Endothelial cell of umbilical vein (primary cell): ENCODE measurements at regions of chr11 and their contacts with region 1.

Region 1: DNA sequence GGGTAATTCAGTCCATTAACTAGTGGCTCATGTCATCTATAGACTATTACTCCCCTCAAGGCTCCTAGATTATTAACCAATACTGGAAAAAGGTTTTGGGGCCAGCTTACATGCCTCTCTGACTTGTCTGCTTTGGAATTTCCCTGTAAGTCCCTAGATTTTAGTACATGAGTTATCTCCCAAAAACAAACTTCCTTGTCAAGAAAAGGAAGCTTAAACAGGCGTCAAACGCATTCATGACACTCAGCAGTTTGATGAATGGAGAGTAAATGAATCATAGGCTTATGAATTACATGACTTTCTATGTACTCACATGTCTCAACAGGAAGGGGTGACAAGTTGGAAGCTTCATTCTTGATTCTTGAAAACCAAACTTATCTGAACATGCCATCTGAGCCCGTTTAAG is 70.8 kb downstream of the BLID start:
- DNase-seq: peak; percentile 92
- H3K4me3 ChIP-seq: no peak overlapping the region
- H3K27ac ChIP-seq: peak overlapping the region; percentile 82
- H3K4me1 ChIP-seq: peaks cover 32% of the 10 kb centered on the region
- H3K27me3 ChIP-seq: no peaks in the 10 kb centered on the region
- CTCF ChIP-seq: no peak
- POLR2A ChIP-seq: no peak

Region 2: DNA sequence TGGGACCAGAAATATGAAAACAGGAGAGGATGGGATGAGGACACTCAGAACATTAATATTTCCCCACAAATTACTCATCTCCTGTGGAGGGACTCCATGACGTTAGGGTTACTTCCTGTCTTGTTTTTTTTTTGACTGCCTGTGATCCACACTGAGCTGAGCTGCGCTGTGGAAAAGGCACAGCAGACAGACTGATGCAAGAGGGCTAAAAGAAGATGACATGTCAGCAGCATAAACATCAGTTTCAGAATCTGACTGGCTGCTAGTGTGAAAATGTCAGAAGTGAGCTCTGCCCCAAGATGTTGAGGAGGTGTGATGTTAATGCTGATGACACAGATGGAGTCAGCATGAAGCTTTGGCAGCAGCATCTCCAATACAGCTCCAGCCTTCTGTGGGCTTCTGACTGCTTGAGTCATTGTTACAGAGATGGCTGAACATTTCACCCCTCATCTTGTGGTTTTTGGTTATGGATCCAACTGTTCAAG is 216.0 kb before region 1 on chr11:
- CTCF ChIA-PET with region 1: no interaction called
- POLR2A ChIA-PET with region 1: no interaction called
- dilution Hi-C with region 1: no loop called
- intact Hi-C with region 1: loop called (anchors 1 kb)
- DNase-seq: peak; percentile 87
- H3K4me3 ChIP-seq: no peak overlapping the region
- H3K27ac ChIP-seq: peak overlapping the region; percentile 81
- H3K4me1 ChIP-seq: peaks cover 26% of the 10 kb centered on the region
- H3K27me3 ChIP-seq: no peaks in the 10 kb centered on the region
- CTCF ChIP-seq: no peak
- POLR2A ChIP-seq: peak; percentile 49

Region 3: GRCh38 chr11:122069707-122070360 is 24.6 kb after region 1 on chr11:
- CTCF ChIA-PET with region 1: interaction called, 3 read pairs
- POLR2A ChIA-PET with region 1: no interaction called
- dilution Hi-C with region 1: no loop called
- intact Hi-C with region 1: loop called (anchors 1 kb)
- DNase-seq: peak; percentile 93
- H3K4me3 ChIP-seq: no peak overlapping the region
- H3K27ac ChIP-seq: no peak overlapping the region
- H3K4me1 ChIP-seq: peaks cover 11% of the 10 kb centered on the region
- H3K27me3 ChIP-seq: no peaks in the 10 kb centered on the region
- CTCF ChIP-seq: no peak
- POLR2A ChIP-seq: no peak

Region 4: DNA sequence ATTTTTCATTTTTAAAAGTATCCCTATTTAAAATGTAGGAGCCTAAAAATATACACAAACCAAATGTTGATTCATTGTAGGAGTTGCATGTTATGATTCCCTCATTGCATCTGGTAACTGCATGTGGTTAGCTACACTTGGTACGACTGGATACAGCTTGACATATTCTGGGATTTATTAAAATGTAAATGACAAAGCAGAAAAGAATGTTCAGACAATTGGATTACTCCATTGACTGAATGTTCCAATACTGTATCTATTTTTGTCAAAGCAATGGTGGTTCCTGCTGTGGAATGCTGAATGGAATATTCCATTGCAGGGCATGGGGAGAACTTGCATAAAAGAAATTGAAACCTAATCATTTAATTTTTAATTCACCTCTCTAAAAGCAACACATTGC is 40.1 kb after region 1 on chr11:
- CTCF ChIA-PET with region 1: interaction called, 4 read pairs
- POLR2A ChIA-PET with region 1: no interaction called
- dilution Hi-C with region 1: no loop called
- intact Hi-C with region 1: loop called (anchors 2 kb)
- DNase-seq: peak; percentile 75
- H3K4me3 ChIP-seq: no peak overlapping the region
- H3K27ac ChIP-seq: peak overlapping the region; percentile 38
- H3K4me1 ChIP-seq: peaks cover 10% of the 10 kb centered on the region
- H3K27me3 ChIP-seq: no peaks in the 10 kb centered on the region
- CTCF ChIP-seq: no peak
- POLR2A ChIP-seq: peak; percentile 52

Region 5: DNA sequence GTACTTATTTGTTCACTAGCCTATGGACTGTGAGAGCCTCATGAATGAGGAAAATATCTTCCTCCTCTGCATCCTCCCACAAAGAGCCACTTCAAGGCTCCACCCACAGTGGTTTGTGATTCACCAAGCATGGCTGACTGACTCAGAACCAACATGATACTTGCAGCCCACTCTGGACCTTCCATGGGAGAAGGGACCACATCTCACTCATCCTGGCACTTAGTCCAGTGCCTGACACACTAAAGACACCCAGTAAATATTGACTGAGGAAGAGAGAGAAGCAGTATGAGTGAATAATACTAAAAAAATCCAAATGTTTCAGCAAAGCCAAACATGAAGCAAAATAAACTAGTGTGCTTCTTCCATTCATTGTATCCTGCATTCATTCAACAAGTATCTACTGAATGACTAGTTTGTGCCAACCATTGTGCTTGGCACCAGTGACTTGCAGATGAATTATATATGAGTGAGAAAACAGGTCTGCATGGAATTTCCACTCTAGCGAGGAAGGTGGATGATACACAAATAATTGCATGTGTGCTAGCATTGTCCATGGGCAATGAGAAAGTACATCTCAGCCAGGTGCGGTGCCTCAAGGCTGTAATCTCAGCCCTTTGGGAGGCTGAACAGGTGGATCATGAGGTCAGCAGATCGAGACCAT is 125.8 kb after region 1 on chr11:
- CTCF ChIA-PET with region 1: no interaction called
- POLR2A ChIA-PET with region 1: no interaction called
- dilution Hi-C with region 1: no loop called
- intact Hi-C with region 1: no loop called
- DNase-seq: peak; percentile 26
- H3K4me3 ChIP-seq: no peak overlapping the region
- H3K27ac ChIP-seq: no peak overlapping the region
- H3K4me1 ChIP-seq: peaks cover 61% of the 10 kb centered on the region
- H3K27me3 ChIP-seq: no peaks in the 10 kb centered on the region
- CTCF ChIP-seq: no peak
- POLR2A ChIP-seq: no peak

Region 6: DNA sequence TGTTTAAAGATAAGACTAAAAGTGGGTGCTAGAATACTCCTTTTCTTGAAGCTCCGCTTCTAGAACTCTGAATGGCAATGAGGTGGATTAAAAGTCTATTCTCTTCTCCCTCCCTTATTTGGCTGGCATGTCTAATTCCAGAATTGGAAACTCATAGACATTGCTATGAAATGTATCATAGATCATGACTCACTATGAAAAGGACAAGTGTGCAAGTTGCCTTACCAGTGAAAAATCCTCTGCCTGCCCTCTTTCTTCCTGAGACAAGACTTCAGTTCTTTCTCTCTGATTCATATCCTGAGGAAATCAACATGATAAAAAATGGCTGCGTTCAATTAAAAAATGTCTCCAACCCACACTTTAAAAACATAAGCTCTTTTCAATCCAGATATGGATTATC is 144.0 kb after region 1 on chr11:
- CTCF ChIA-PET with region 1: no interaction called
- POLR2A ChIA-PET with region 1: no interaction called
- dilution Hi-C with region 1: no loop called
- intact Hi-C with region 1: loop called (anchors 2 kb)
- DNase-seq: peak; percentile 94
- H3K4me3 ChIP-seq: peak overlapping the region in 1 of 3 experiments; percentile 7
- H3K27ac ChIP-seq: peak overlapping the region; percentile 85
- H3K4me1 ChIP-seq: peaks cover 58% of the 10 kb centered on the region
- H3K27me3 ChIP-seq: no peaks in the 10 kb centered on the region
- CTCF ChIP-seq: no peak
- POLR2A ChIP-seq: peak; percentile 57